Calu3 (cell line): ENCODE measurements at regions of chr19 and their contacts with region 1.

Region 1: GRCh38 chr19:47243776-47244547 is 12.4 kb upstream of the CCDC9 start:
- DNase-seq: peak; percentile 97
- H3K4me3 Mint-ChIP-seq: no peak overlapping the region
- H3K27ac Mint-ChIP-seq: no peak overlapping the region
- H3K4me1 Mint-ChIP-seq: peaks cover 4% of the 10 kb centered on the region
- H3K27me3 Mint-ChIP-seq: peaks cover 7% of the 10 kb centered on the region
- CTCF ChIP-seq: peak; percentile 97

Region 2: DNA sequence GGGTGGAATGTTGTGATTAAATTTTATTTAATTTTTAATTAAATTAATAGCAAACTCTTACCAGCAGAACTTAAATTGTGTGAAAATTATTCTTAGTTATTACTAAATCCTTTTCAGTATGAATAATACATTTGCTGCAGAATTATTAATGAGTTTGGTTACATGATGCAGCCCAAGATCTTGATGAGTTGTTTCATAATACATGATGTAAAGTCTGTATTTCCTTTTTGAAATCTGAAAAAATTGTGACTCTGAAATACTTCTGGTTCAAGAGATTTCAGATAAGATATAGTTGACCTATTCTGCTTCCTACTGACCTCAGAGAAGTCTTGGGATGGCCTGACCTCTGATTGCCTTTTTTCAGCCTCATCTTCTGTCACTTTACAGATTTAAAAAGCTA is 102.3 kb before region 1 on chr19:
- CTCF ChIA-PET with region 1: no interaction called
- intact Hi-C with region 1: no loop called
- DNase-seq: no peak
- H3K4me3 Mint-ChIP-seq: no peak overlapping the region
- H3K27ac Mint-ChIP-seq: no peak overlapping the region
- H3K4me1 Mint-ChIP-seq: peaks cover 29% of the 10 kb centered on the region
- H3K27me3 Mint-ChIP-seq: no peaks in the 10 kb centered on the region
- CTCF ChIP-seq: no peak

Region 3: GRCh38 chr19:47152224-47153017 is 91.5 kb before region 1 on chr19:
- CTCF ChIA-PET with region 1: interaction called, 17 read pairs
- intact Hi-C with region 1: loop called (anchors 1 kb)
- DNase-seq: peak; percentile 49
- H3K4me3 Mint-ChIP-seq: peak overlapping the region; percentile 39
- H3K27ac Mint-ChIP-seq: peak overlapping the region; percentile 23
- H3K4me1 Mint-ChIP-seq: peaks cover 37% of the 10 kb centered on the region
- H3K27me3 Mint-ChIP-seq: no peaks in the 10 kb centered on the region
- CTCF ChIP-seq: no peak

Region 4: GRCh38 chr19:47190167-47190727 is 53.7 kb before region 1 on chr19:
- CTCF ChIA-PET with region 1: interaction called, 13 read pairs
- intact Hi-C with region 1: no loop called
- DNase-seq: peak; percentile 87
- H3K4me3 Mint-ChIP-seq: peak overlapping the region; percentile 21
- H3K27ac Mint-ChIP-seq: peak overlapping the region; percentile 50
- H3K4me1 Mint-ChIP-seq: peaks cover 58% of the 10 kb centered on the region
- H3K27me3 Mint-ChIP-seq: no peaks in the 10 kb centered on the region
- CTCF ChIP-seq: no peak

Region 5: GRCh38 chr19:47210689-47211316 is 33.2 kb before region 1 on chr19:
- CTCF ChIA-PET with region 1: interaction called, 251 read pairs
- intact Hi-C with region 1: loop called (anchors 1 kb)
- DNase-seq: peak; percentile 88
- H3K4me3 Mint-ChIP-seq: peak overlapping the region; percentile 18
- H3K27ac Mint-ChIP-seq: peak overlapping the region; percentile 95
- H3K4me1 Mint-ChIP-seq: peaks cover 11% of the 10 kb centered on the region
- H3K27me3 Mint-ChIP-seq: no peaks in the 10 kb centered on the region
- CTCF ChIP-seq: peak; percentile 88

Region 6: GRCh38 chr19:47225746-47226425 is 18.1 kb before region 1 on chr19:
- CTCF ChIA-PET with region 1: interaction called, 31 read pairs
- intact Hi-C with region 1: no loop called
- DNase-seq: peak; percentile 92
- H3K4me3 Mint-ChIP-seq: no peak overlapping the region
- H3K27ac Mint-ChIP-seq: peak overlapping the region; percentile 87
- H3K4me1 Mint-ChIP-seq: no peaks in the 10 kb centered on the region
- H3K27me3 Mint-ChIP-seq: no peaks in the 10 kb centered on the region
- CTCF ChIP-seq: peak; percentile 64

Region 7: GRCh38 chr19:47231215-47231984 is 12.6 kb before region 1 on chr19:
- CTCF ChIA-PET with region 1: interaction called, 31 read pairs
- intact Hi-C with region 1: no loop called
- DNase-seq: peak; percentile 95
- H3K4me3 Mint-ChIP-seq: no peak overlapping the region
- H3K27ac Mint-ChIP-seq: peak overlapping the region; percentile 69
- H3K4me1 Mint-ChIP-seq: peaks cover 19% of the 10 kb centered on the region
- H3K27me3 Mint-ChIP-seq: peaks cover 11% of the 10 kb centered on the region
- CTCF ChIP-seq: no peak

Region 8: DNA sequence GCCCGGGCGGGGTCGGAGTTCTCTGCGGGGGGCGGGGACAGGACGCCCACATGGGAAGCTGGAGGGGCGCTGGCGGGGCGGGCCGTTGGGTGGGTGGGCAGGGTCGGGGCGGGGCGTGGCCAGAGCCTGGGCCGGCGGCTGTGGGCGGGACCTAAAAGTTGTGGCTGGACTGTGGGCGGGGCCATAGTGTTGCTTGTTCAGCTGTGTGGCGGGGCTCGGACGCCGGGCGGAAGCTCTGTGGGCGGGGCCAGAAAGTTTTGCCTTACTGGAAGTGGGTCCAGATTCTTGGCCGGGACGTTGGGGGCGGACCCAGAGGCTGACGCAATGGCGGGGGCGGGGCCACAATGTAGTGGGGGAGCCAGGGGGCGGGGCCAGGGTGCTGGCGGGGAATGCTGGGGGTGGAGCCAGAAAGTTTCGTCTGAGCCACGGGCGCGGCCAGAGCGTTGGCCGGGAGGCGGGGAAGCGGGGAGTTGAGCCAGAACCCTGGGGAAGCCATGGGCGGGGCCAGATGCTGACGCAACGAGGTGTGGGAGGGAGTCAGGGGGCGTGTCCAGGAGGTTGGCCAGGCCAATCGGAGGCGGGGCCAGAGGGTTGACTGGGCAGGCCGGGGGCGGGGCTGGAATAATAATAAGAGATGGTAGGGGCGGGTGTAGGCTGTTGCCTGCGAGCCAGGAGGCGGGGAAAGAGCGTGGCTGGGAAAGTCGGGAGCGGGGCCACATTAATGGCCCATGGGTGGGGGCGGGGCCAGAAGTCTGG is 12.9 kb after region 1 on chr19:
- CTCF ChIA-PET with region 1: interaction called, 28 read pairs
- intact Hi-C with region 1: no loop called
- DNase-seq: peak; percentile 100
- H3K4me3 Mint-ChIP-seq: peak overlapping the region; percentile 85
- H3K27ac Mint-ChIP-seq: peak overlapping the region; percentile 100
- H3K4me1 Mint-ChIP-seq: peaks cover 37% of the 10 kb centered on the region
- H3K27me3 Mint-ChIP-seq: no peaks in the 10 kb centered on the region
- CTCF ChIP-seq: no peak

Region 9: GRCh38 chr19:47305309-47305751 is 61.4 kb after region 1 on chr19:
- CTCF ChIA-PET with region 1: no interaction called
- intact Hi-C with region 1: no loop called
- DNase-seq: peak; percentile 86
- H3K4me3 Mint-ChIP-seq: no peak overlapping the region
- H3K27ac Mint-ChIP-seq: peak overlapping the region; percentile 53
- H3K4me1 Mint-ChIP-seq: peaks cover 7% of the 10 kb centered on the region
- H3K27me3 Mint-ChIP-seq: peaks cover 11% of the 10 kb centered on the region
- CTCF ChIP-seq: peak; percentile 98

Region 10: DNA sequence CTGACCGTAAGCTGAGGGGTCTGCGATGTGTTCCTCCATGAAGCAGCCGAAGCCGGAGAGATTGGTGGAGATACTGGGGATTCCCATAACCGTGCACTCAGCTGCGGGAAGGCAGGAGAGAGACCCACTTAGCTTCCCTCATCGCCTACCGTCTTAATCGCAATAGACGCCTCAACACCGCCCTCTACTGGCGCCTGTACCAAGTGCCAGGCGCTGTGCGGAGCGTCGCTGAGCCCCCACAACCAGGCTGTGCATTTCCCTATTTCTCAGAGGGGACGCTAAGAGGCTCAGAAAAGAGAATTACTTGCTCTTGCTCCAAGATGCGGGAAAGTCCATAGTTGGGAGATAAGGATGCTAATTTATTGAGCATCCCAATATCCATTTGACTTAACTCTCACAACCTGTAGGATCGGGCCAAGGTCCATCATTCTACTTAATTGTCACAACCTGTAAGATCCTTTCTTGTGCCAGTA is 1727.0 kb after region 1 on chr19:
- CTCF ChIA-PET with region 1: no interaction called
- intact Hi-C with region 1: no loop called
- DNase-seq: peak; percentile 85
- H3K4me3 Mint-ChIP-seq: no peak overlapping the region
- H3K27ac Mint-ChIP-seq: no peak overlapping the region
- H3K4me1 Mint-ChIP-seq: no peaks in the 10 kb centered on the region
- H3K27me3 Mint-ChIP-seq: no peaks in the 10 kb centered on the region
- CTCF ChIP-seq: peak; percentile 95